GM12878 (cell line): ENCODE measurements at regions of chr14 and their contacts with region 1.

Region 1: GRCh38 chr14:81464247-81465002 is 64.3 kb upstream of the STON2 start:
- DNase-seq: peak; percentile 64
- ATAC-seq: peak; percentile 76
- H3K4me3 ChIP-seq: peak overlapping the region; percentile 77; the same call in 1 of the 2 replicates
- H3K27ac ChIP-seq: peak overlapping the region; percentile 83
- H3K4me1 ChIP-seq: peaks cover 5% of the 10 kb centered on the region
- H3K27me3 ChIP-seq: no peaks in the 10 kb centered on the region
- CTCF ChIP-seq: peak; percentile 82 to 92 (median 87)
- EP300 ChIP-seq: no peak
- POLR2A ChIP-seq: no peak
- RAD21 ChIP-seq: peak; percentile 94

Region 2: GRCh38 chr14:80954687-80955299 is 509.6 kb before region 1 on chr14:
- CTCF ChIA-PET with region 1: no interaction called
- POLR2A ChIA-PET with region 1: no interaction called
- RAD21 ChIA-PET with region 1: interaction called, 3 read pairs
- SMC1A ChIA-PET with region 1: no interaction called
- in situ Hi-C with region 1: loop called (anchors 5 kb)
- intact Hi-C with region 1: loop called (anchors 2 kb)
- DNase-seq: no peak
- ATAC-seq: peak; percentile 46
- H3K4me3 ChIP-seq: no peak overlapping the region; the same call in 1 of the 2 replicates
- H3K27ac ChIP-seq: no peak overlapping the region
- H3K4me1 ChIP-seq: peaks cover 12% of the 10 kb centered on the region
- H3K27me3 ChIP-seq: peaks cover 0 to 5% of the 10 kb centered on the region in 2 experiments; a peak in 3 of 4 replicates
- CTCF ChIP-seq: peak; percentile 70 to 83 (median 71)
- EP300 ChIP-seq: no peak
- POLR2A ChIP-seq: no peak
- RAD21 ChIP-seq: peak; percentile 84

Region 3: GRCh38 chr14:80996049-80996901 is 468.1 kb before region 1 on chr14:
- CTCF ChIA-PET with region 1: interaction called, 16 read pairs
- POLR2A ChIA-PET with region 1: no interaction called
- RAD21 ChIA-PET with region 1: interaction called, 9 read pairs
- SMC1A ChIA-PET with region 1: interaction called, 6 read pairs
- in situ Hi-C with region 1: no loop called
- intact Hi-C with region 1: no loop called
- DNase-seq: no peak
- ATAC-seq: peak; percentile 92
- H3K4me3 ChIP-seq: no peak overlapping the region
- H3K27ac ChIP-seq: no peak overlapping the region
- H3K4me1 ChIP-seq: no peaks in the 10 kb centered on the region
- H3K27me3 ChIP-seq: no peaks in the 10 kb centered on the region
- CTCF ChIP-seq: peak; percentile 53 to 59 (median 56)
- EP300 ChIP-seq: no peak
- POLR2A ChIP-seq: no peak
- RAD21 ChIP-seq: peak; percentile 73

Region 4: DNA sequence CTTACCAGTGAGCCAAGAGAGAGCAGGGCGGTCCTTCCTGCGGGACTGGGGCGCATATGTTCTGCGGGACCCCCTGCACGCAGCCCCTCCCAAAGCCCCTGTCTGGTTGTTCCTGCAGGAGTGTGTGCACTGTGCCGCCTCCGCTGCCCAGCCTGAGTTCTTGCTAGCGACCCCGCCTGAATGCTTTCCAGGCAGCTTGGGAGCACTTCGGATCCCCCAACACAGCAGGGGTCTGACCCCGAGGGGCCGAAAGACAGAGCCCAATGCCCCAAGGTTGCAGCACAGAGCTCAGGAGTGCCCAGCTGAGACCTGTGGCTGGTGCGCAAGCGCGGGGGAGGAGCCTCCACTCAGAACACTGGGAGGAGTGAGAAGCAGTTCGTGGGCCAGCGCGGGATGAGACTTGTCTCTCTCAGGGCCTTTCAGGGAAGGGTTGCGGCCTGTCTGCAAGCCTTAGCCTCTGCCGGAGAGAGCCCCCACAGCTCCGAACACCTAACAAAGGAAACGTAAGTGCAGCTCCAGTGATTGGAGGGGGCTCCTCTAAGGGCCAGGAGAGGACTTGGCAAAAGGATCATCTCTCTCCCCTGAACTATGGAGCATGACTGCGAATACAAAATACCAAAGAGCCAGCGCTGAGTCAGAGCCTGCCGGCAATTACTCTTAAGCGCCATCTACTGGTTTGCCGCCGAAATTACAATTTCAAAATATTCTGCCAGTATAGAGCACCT is 294.2 kb before region 1 on chr14:
- CTCF ChIA-PET with region 1: interaction called, 7 read pairs
- POLR2A ChIA-PET with region 1: interaction called, 7 read pairs
- RAD21 ChIA-PET with region 1: interaction called, 5 read pairs
- SMC1A ChIA-PET with region 1: interaction called, 5 read pairs
- in situ Hi-C with region 1: no loop called
- intact Hi-C with region 1: loop called (anchors 5 kb)
- DNase-seq: peak; percentile 61
- ATAC-seq: peak; percentile 99
- H3K4me3 ChIP-seq: peak overlapping the region; percentile 80
- H3K27ac ChIP-seq: peak overlapping the region; percentile 84
- H3K4me1 ChIP-seq: peaks cover 32% of the 10 kb centered on the region
- H3K27me3 ChIP-seq: no peaks in the 10 kb centered on the region
- CTCF ChIP-seq: peak; percentile 82 to 86 (median 83)
- EP300 ChIP-seq: no peak
- POLR2A ChIP-seq: peak; percentile 87
- RAD21 ChIP-seq: peak; percentile 75

Region 5: DNA sequence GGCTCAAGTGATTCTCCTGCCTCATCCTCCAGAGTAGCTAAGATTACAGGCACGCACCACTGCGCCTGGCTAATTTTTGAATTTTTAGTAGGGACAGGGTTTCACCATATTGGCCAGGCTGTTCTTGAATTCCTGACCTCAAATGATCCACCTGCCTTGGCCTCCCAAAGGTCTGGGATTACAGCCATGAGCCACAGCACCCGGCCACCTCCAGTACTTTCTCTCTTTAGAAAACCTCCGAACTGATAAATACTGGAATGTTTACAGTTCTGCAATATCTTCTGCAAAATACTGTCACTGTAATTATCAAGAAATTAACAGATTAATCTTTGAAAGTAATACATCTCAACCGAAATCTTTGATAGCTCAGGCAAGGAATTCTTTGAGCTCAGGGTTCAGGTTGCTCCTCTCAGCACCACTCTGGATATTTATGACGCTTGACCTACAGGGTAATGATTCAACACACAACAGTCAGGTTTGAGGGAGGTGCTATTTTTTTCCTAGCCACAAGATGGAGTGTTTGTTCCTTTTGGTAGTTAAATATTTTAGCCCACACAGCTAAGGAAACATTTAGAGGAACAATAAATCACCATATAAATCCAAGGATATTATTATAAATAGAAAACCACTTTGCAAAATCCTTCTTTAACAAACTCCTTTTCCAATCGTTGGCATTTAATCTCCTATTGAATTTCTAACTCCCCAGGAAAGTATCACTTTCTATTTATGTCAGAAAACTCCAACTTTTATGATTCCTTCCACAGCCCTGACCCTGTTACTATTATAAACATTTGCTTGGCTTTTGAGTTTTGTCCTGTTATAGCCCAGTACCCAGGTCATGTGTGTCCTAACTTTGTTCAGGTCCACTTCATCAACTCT is 195.1 kb before region 1 on chr14:
- CTCF ChIA-PET with region 1: interaction called, 101 read pairs
- POLR2A ChIA-PET with region 1: no interaction called
- RAD21 ChIA-PET with region 1: interaction called, 48 read pairs
- SMC1A ChIA-PET with region 1: interaction called, 47 read pairs
- in situ Hi-C with region 1: no loop called
- intact Hi-C with region 1: loop called (anchors 1 kb)
- DNase-seq: peak; percentile 26
- ATAC-seq: peak; percentile 89
- H3K4me3 ChIP-seq: no peak overlapping the region
- H3K27ac ChIP-seq: no peak overlapping the region
- H3K4me1 ChIP-seq: no peaks in the 10 kb centered on the region
- H3K27me3 ChIP-seq: no peaks in the 10 kb centered on the region; a peak in 1 of 4 replicates
- CTCF ChIP-seq: peak; percentile 58 to 76 (median 63)
- EP300 ChIP-seq: no peak
- POLR2A ChIP-seq: no peak
- RAD21 ChIP-seq: peak; percentile 77

Region 6: DNA sequence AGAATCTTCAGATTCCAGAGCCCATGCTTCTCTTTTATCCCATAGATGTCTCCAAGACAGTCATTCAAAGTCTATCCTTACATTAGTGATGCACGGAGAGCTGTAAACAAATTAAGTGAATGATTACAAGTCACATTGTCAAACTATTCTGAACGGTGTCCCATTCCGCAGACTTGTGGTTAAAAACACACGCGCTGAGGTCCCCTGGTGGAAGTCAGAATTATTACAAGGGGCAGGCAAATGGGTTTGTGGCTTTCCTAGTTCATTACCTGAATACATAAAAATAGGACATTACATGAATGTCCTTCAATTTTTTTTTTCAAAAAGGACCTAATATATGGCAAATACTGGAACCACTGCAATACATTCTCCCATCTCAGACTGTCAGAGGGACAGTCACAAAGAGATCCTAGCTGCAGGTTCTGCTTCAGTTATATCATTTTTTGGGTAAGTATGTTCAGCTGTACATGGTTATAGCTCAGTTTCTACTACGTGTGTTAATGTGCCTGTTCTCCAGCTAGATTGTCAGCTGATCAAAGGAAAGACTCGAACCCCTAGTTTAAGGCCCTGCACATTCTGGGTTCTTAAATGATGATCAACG is 11.2 kb before region 1 on chr14:
- CTCF ChIA-PET with region 1: interaction called, 50 read pairs
- POLR2A ChIA-PET with region 1: no interaction called
- RAD21 ChIA-PET with region 1: interaction called, 21 read pairs
- SMC1A ChIA-PET with region 1: interaction called, 16 read pairs
- in situ Hi-C with region 1: no loop called
- intact Hi-C with region 1: no loop called
- DNase-seq: no peak
- ATAC-seq: peak; percentile 80
- H3K4me3 ChIP-seq: no peak overlapping the region
- H3K27ac ChIP-seq: no peak overlapping the region
- H3K4me1 ChIP-seq: peaks cover 3% of the 10 kb centered on the region; the same call in 1 of the 2 replicates
- H3K27me3 ChIP-seq: no peaks in the 10 kb centered on the region; a peak in 3 of 4 replicates
- CTCF ChIP-seq: peak; percentile 75 to 85 (median 84)
- EP300 ChIP-seq: no peak
- POLR2A ChIP-seq: no peak
- RAD21 ChIP-seq: peak; percentile 84

Region 7: GRCh38 chr14:81478446-81478845 is 14.0 kb after region 1 on chr14:
- CTCF ChIA-PET with region 1: interaction called, 21 read pairs
- POLR2A ChIA-PET with region 1: no interaction called
- RAD21 ChIA-PET with region 1: no interaction called
- SMC1A ChIA-PET with region 1: interaction called, 7 read pairs
- in situ Hi-C with region 1: no loop called
- intact Hi-C with region 1: no loop called
- DNase-seq: no peak
- ATAC-seq: peak; percentile 37
- H3K4me3 ChIP-seq: no peak overlapping the region
- H3K27ac ChIP-seq: no peak overlapping the region
- H3K4me1 ChIP-seq: peaks cover 12% of the 10 kb centered on the region
- H3K27me3 ChIP-seq: no peaks in the 10 kb centered on the region
- CTCF ChIP-seq: no peak
- EP300 ChIP-seq: no peak
- POLR2A ChIP-seq: no peak
- RAD21 ChIP-seq: no peak